T-cell (primary cell): ENCODE measurements at regions of chr20 and their contacts with region 1.

Region 1: GRCh38 chr20:45011108-45011526 is 44.8 kb downstream of the STK4 start:
- DNase-seq: peak in 33 of 35 experiments; percentile 5 to 72 (median 33)
- ATAC-seq: peak; percentile 72 to 85 (median 79)
- H3K4me3 ChIP-seq: no peak overlapping the region
- H3K4me3 Mint-ChIP-seq: no peak overlapping the region
- H3K27ac ChIP-seq: no peak overlapping the region
- H3K27ac Mint-ChIP-seq: peak overlapping the region; percentile 3 to 18
- H3K4me1 ChIP-seq: peaks cover 3 to 6% of the 10 kb centered on the region in 2 experiments
- H3K4me1 Mint-ChIP-seq: peaks cover 74 to 79% (median 76%) of the 10 kb centered on the region in 3 donors
- H3K27me3 ChIP-seq: no peaks in the 10 kb centered on the region
- H3K27me3 Mint-ChIP-seq: no peaks in the 10 kb centered on the region

Region 2: DNA sequence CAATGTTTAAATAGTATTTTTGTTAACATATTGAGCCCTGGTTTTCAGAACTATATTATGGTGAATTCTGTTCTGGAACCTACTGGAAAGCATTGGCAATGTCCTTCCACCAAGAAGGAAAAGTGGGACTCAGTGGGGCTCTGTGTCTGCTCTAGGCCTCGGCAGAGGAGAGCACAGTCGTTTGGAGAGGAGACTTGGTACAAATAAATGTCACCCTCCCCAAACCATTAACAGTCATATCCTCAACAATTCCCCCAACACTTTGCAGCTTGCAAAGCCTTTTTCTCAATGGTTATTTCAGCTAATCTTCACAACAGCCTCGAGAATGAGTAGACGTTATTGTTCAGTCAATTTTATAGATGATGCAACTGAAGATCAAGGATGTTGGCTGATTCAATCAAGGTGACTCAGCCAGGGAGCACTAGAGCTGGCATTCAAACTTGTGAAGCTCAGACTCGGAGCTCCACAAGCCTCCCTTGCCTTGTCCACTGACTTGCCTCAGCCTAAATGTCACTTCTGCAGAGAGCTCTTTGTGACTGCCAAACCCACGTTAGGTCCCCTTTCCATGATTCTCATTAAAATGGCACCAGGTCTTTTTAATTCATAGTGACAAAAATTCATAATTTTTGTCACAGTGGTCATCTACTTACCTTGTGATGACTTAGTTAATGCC is 1035.9 kb before region 1 on chr20:
- CTCF ChIA-PET with region 1: no interaction called
- POLR2A ChIA-PET with region 1: no interaction called
- DNase-seq: no peak
- ATAC-seq: no peak
- H3K4me3 ChIP-seq: no peak overlapping the region
- H3K4me3 Mint-ChIP-seq: no peak overlapping the region
- H3K27ac ChIP-seq: no peak overlapping the region
- H3K27ac Mint-ChIP-seq: no peak overlapping the region
- H3K4me1 ChIP-seq: peaks cover 0 to 11% of the 10 kb centered on the region in 2 experiments
- H3K4me1 Mint-ChIP-seq: peaks cover 0 to 23% (median 3%) of the 10 kb centered on the region in 3 donors
- H3K27me3 ChIP-seq: peaks cover 0 to 17% of the 10 kb centered on the region in 2 experiments
- H3K27me3 Mint-ChIP-seq: peaks cover 0 to 7% of the 10 kb centered on the region in 2 donors

Region 3: DNA sequence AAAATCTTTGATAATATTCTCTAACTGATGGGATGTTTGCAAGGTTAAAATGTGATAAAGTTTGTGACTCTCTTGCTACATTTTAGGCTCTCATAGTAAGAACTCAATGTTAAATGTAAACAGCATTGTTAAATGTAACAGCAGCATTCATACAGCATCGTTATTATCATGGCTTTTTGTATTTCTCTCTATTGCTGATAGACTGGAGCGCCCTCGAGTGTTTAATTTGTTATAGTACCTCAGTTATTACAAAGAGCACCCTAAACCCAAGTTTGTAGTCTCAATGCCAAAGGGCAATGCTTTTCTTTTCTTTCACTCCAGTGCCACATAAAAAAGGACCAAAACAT is 550.3 kb before region 1 on chr20:
- CTCF ChIA-PET with region 1: no interaction called
- POLR2A ChIA-PET with region 1: no interaction called
- DNase-seq: peak in 1 of 35 experiments; percentile 40
- ATAC-seq: peak in 2 of 4 experiments; percentile 30 to 52
- H3K4me3 ChIP-seq: no peak overlapping the region
- H3K4me3 Mint-ChIP-seq: no peak overlapping the region
- H3K27ac ChIP-seq: no peak overlapping the region
- H3K27ac Mint-ChIP-seq: no peak overlapping the region
- H3K4me1 ChIP-seq: no peaks in the 10 kb centered on the region
- H3K4me1 Mint-ChIP-seq: no peaks in the 10 kb centered on the region
- H3K27me3 ChIP-seq: peaks cover 0 to 1% of the 10 kb centered on the region in 2 experiments
- H3K27me3 Mint-ChIP-seq: no peaks in the 10 kb centered on the region

Region 4: DNA sequence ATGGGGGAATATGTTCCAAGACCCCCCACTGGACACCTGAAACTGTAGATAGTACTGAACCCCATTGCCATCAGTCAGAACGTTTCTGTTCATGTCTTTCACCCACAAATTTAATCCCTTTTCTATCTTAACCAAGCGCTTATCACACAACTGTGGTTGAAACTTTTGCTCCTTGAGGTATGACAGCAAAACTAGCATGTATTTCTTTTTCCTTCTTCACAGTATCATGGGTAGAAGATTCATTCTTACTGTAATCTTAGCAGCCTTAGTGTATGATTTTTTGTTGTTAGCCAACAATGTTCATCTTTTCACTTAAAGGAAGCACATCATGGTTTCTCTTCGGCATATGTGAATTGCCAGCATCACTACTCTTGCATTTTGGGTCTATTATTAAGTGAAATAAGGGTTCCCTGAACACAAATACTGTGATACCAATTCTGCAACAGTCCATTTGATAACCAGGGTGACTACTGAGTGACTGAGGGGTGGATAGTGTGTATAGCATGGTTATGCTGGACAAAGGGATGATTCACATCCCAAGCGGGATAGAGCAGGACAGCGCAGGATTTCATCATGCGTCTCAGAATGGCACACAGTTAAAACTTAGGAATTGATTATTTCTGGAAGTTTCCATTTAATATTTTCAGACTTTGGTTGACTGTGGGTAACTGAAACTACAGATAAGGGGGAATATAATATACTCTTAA is 48.1 kb after region 1 on chr20:
- CTCF ChIA-PET with region 1: no interaction called
- POLR2A ChIA-PET with region 1: no interaction called
- DNase-seq: no peak
- ATAC-seq: no peak
- H3K4me3 ChIP-seq: no peak overlapping the region
- H3K4me3 Mint-ChIP-seq: no peak overlapping the region
- H3K27ac ChIP-seq: no peak overlapping the region
- H3K27ac Mint-ChIP-seq: peak overlapping the region; percentile 25 to 48
- H3K4me1 ChIP-seq: peaks cover 3 to 6% of the 10 kb centered on the region in 2 experiments
- H3K4me1 Mint-ChIP-seq: peaks cover 77 to 82% (median 82%) of the 10 kb centered on the region in 3 donors
- H3K27me3 ChIP-seq: no peaks in the 10 kb centered on the region
- H3K27me3 Mint-ChIP-seq: no peaks in the 10 kb centered on the region

Region 5: DNA sequence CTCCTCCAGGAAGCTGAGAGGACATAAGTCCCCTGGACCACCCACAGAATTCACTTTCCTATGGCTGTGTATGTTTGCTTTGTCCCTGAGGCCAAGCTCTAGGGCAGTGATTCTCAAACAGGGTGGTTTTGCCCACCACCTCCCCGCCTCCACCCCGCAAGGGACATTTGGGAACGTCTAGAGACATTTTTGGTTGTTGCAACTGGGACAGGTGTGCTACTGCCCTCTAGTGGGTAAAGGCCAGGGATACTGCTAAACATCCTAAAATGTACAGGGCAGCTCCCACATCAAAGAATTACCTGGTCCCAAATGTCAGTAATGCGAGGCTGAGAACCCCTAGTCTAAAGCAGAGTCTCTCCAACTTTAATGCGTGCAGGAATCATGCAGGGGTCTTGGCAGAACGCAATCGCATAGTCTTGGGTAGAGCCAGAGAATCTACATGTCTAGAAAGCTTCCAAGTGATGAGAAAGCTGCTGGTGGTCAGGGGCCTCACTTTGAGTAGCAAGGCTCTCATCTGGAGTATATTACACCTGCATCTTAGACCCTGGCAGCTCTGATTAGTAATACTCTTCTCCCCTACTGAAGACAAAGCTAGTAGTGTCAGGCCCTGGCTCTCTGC is 84.7 kb after region 1 on chr20:
- CTCF ChIA-PET with region 1: interaction called in 1 of 2 experiments, 15 read pairs
- POLR2A ChIA-PET with region 1: no interaction called
- DNase-seq: peak in 33 of 35 experiments; percentile 8 to 81 (median 45)
- ATAC-seq: peak; percentile 52 to 65 (median 56)
- H3K4me3 ChIP-seq: no peak overlapping the region
- H3K4me3 Mint-ChIP-seq: no peak overlapping the region
- H3K27ac ChIP-seq: no peak overlapping the region
- H3K27ac Mint-ChIP-seq: no peak overlapping the region
- H3K4me1 ChIP-seq: peaks cover 0 to 18% of the 10 kb centered on the region in 2 experiments
- H3K4me1 Mint-ChIP-seq: peaks cover 4 to 22% (median 18%) of the 10 kb centered on the region in 3 donors
- H3K27me3 ChIP-seq: peaks cover 14 to 33% of the 10 kb centered on the region in 2 experiments
- H3K27me3 Mint-ChIP-seq: peaks cover 29 to 39% of the 10 kb centered on the region in 2 donors